ENCODE measurements at regions of chr3 and their contacts with region 1.

Region 1: DNA sequence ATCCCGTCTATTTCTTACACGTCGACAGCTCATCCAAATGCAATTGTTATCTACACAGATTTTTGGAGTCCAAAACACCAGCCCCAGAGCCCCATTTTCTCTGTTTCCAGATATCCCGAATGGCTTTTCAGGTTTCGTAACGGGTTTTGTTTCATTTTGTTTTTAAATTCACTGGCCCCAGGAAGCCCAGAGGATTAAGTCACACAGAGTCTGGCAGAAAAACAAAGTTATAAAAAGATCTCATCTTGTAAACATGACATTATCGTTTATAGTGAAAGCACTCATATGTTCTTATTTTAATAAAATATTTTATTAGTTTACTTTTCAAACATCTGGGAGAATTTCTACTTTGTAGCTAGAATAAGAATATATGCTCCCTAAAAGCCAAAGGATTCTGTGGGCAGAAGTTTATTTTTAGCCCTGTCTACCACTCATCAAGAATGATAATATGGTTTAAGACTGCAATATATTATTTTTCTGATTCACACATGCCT is 149.3 kb upstream of the SLC2A2 start:
- DNase-seq: no peak
- ATAC-seq: no peak
- H3K4me3 Mint-ChIP-seq: no peak overlapping the region
- H3K27ac Mint-ChIP-seq: no peak overlapping the region
- H3K4me1 Mint-ChIP-seq: peaks cover 20% of the 10 kb centered on the region
- H3K27me3 Mint-ChIP-seq: no peaks in the 10 kb centered on the region

Region 2: GRCh38 chr3:170858599-170858998 is 317.2 kb before region 1 on chr3:
- CTCF ChIA-PET with region 1: no interaction called
- POLR2A ChIA-PET with region 1: no interaction called
- DNase-seq: no peak
- ATAC-seq: no peak
- H3K4me3 Mint-ChIP-seq: no peak overlapping the region
- H3K27ac Mint-ChIP-seq: no peak overlapping the region
- H3K4me1 Mint-ChIP-seq: peaks cover 2% of the 10 kb centered on the region
- H3K27me3 Mint-ChIP-seq: peaks cover 6% of the 10 kb centered on the region

Region 3: GRCh38 chr3:171162986-171163723 is 12.6 kb before region 1 on chr3:
- CTCF ChIA-PET with region 1: interaction called, 12 read pairs
- POLR2A ChIA-PET with region 1: no interaction called
- DNase-seq: peak; percentile 38
- ATAC-seq: no peak
- H3K4me3 Mint-ChIP-seq: no peak overlapping the region
- H3K27ac Mint-ChIP-seq: peak overlapping the region; percentile 56
- H3K4me1 Mint-ChIP-seq: peaks cover 20% of the 10 kb centered on the region
- H3K27me3 Mint-ChIP-seq: no peaks in the 10 kb centered on the region

Measured in activated CD8-positive, alpha-beta T cell treated with anti-CD3 and anti-CD28 coated beads, Interleukin-2, amount 10 ng/mL, durations not matched to agents 7 days and 5 days (primary cell).